ENCODE measurements at regions of chr20 and their contacts with region 1.

Region 1: DNA sequence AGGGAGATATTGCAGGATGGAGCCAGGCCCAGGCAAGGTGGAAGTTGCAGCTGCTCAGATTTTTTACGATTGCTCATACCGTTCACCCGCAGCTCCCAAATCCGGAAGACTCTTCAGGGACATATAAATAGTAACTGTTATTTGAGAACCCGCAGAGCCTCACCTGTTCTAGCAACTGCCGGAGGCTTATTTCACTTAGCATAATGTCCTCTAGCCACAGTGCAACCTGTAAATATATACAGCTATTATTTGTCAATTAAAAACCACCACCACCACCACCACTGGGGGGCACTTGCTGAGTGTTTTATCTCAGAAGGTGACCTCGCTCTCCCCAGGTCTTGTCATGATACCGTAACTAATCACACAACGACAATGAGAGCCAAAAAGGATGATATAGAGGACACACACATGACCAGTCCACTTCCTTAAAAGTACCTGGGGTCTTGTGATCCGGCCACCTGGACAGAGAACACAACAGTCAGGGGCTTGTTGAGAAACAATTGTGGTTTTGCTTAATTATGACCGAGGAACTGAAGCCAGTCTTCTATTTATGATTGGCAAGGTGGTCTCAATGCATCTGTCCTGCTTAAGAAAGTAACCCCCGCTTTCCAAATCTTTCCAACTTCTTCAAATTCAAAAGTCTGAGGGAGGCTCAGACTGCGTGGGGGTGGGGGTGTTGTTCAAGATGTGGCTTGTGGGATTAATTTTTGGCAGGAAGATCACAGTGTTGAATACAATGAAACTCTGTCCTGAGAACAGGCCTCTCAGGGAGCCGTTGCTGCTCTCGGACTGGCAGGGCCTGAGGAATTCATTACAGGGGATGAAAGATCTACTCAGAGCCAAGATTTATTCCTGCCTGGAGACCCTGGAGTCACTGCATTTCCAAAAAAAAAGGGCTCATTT is 107.7 kb upstream of the PRND start:
- DNase-seq: peak; percentile 81
- ATAC-seq: peak; percentile 96
- H3K4me3 ChIP-seq: no peak overlapping the region
- H3K4me3 Mint-ChIP-seq: peak overlapping the region; percentile 46
- H3K27ac ChIP-seq: peak overlapping the region in 1 of 2 donors; percentile 16
- H3K27ac Mint-ChIP-seq: peak overlapping the region; percentile 78
- H3K4me1 ChIP-seq: peaks cover 12 to 15% of the 10 kb centered on the region in 2 donors
- H3K4me1 Mint-ChIP-seq: peaks cover 14% of the 10 kb centered on the region
- H3K27me3 ChIP-seq: no peaks in the 10 kb centered on the region
- H3K27me3 Mint-ChIP-seq: no peaks in the 10 kb centered on the region
- CTCF ChIP-seq: peak; percentile 71

Region 2: DNA sequence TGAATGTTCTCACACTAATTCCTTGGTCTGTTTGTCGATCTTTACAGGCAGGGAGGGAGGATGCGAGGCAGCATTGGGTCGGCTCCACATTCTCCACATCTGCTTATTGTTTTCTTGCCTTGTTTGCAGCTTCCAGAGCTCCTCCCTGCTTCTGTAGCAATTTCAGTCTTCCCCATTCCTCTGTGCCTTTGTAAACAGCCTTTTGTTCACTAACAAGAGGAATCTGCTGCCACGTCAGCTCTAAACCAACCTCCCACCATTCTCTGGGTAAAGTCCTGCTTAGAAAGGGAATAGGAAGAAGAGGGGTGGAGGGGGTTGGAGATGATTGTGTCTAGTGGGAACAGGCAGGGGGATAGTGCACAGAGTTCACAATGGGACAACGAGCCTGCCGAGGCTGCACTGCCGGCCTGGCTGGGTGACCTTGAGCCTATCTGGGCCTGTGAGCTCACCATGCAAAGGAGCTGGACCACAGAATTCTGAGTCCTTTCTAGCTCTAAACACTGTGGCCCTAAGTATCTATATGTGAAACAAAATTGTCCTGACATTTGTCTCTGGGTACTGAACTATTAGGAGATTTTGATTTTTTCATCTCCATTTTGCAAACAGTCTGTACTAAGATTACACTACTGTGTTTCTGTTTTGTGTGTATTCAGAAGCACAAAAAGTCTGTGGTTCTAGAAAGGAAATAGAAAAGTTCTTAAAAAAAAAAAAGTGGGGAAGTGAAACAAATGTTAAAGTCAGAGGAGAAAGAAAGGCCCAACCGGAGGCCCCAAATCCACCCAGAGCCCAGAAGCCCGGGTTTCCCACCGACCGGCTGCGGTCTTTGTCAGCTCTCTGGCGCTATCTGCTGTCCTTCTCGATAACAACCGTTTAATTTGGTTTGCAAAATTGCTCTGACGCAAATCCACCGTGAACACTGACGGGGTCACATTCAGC is 106.3 kb after region 1 on chr20:
- CTCF ChIA-PET with region 1: interaction called, 145 read pairs
- POLR2A ChIA-PET with region 1: interaction called, 4 read pairs
- intact Hi-C with region 1: loop called (anchors 1 kb)
- DNase-seq: peak; percentile 95
- ATAC-seq: peak; percentile 98
- H3K4me3 ChIP-seq: peak overlapping the region in 2 of 5 experiments; percentile 33 to 38
- H3K4me3 Mint-ChIP-seq: peak overlapping the region; percentile 72
- H3K27ac ChIP-seq: peak overlapping the region; percentile 86 to 89
- H3K27ac Mint-ChIP-seq: peak overlapping the region; percentile 92
- H3K4me1 ChIP-seq: peaks cover 28 to 30% of the 10 kb centered on the region in 2 donors
- H3K4me1 Mint-ChIP-seq: peaks cover 50% of the 10 kb centered on the region
- H3K27me3 ChIP-seq: no peaks in the 10 kb centered on the region
- H3K27me3 Mint-ChIP-seq: no peaks in the 10 kb centered on the region
- CTCF ChIP-seq: peak; percentile 83

Region 3: GRCh38 chr20:4740774-4741431 is 126.9 kb after region 1 on chr20:
- CTCF ChIA-PET with region 1: interaction called, 18 read pairs
- POLR2A ChIA-PET with region 1: no interaction called
- intact Hi-C with region 1: loop called (anchors 5 kb)
- DNase-seq: peak; percentile 76
- ATAC-seq: peak; percentile 56
- H3K4me3 ChIP-seq: no peak overlapping the region
- H3K4me3 Mint-ChIP-seq: no peak overlapping the region
- H3K27ac ChIP-seq: no peak overlapping the region
- H3K27ac Mint-ChIP-seq: no peak overlapping the region
- H3K4me1 ChIP-seq: peaks cover 0 to 3% of the 10 kb centered on the region in 2 donors
- H3K4me1 Mint-ChIP-seq: peaks cover 6% of the 10 kb centered on the region
- H3K27me3 ChIP-seq: peaks cover 0 to 3% (median 1%) of the 10 kb centered on the region in 4 experiments
- H3K27me3 Mint-ChIP-seq: peaks cover 14% of the 10 kb centered on the region
- CTCF ChIP-seq: peak; percentile 94